Left colon (tissue), 2 donors: ENCODE measurements at regions of chrX and their contacts with region 1.

Region 1: DNA sequence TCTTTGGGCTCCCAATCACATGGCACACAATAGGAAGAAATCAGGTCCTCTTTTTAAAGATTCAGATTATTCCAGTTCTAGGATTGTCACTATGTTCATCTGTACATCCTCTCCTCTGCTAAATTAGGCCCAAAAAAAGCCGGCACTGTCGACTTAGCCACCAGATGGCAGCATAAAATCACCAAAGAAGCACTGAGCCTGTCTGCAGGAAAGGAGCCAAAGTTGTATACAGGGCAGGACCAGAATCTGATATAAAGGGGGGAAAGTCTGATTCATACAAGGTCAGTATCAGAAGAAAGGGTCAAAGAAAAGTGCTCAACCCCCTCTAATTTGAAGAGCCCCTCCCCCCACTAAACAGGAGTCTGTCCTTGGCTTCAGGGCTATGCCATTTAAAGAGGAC is 292.5 kb downstream of the CHIC1 start:
- DNase-seq: peak; percentile 49 to 70
- ATAC-seq: peak; percentile 19

Region 2: GRCh38 chrX:73943693-73944562 is 88.4 kb after region 1 on chrX:
- intact Hi-C with region 1: loop called in 1 of 2 experiments (anchors 10 kb)
- DNase-seq: peak; percentile 88 to 94
- ATAC-seq: peak; percentile 100

Region 3: DNA sequence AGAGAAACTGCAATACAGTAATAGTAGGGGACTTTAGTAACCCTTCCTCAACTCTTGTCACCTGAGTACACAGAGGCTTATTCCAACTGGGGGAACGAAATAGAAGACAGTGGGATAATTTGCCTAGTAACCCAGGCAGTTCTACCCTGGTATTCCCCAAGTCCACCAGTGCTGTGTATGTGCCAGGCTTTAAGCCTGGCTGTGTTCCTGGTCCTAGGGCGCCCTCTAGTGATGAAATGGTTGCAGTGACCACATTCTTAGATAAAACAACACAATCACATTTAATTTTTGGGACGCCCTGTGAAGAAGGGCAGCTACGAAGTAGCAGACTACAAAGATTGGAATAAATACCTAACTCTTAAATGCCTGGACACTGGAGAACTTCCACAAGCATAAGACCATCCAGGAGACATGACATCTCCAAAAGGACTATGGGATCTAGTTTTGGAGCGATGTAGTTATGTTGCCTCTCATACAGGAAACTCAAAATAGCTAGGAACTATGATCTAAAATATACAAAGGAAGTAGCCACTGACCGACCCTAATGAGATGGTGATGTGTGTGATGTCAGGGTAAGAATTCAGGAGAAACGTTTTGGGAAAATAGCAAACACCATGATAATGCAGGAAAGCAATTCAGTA is 160.0 kb after region 1 on chrX:
- intact Hi-C with region 1: loop called in 1 of 2 experiments (anchors 5 kb)
- DNase-seq: peak; percentile 33 to 72
- ATAC-seq: peak; percentile 91

Region 4: GRCh38 chrX:74133156-74133796 is 277.7 kb after region 1 on chrX:
- intact Hi-C with region 1: loop called in 1 of 2 experiments (anchors 5 kb)
- DNase-seq: no peak
- ATAC-seq: peak; percentile 82

Region 5: GRCh38 chrX:74343343-74344279 is 488.1 kb after region 1 on chrX:
- intact Hi-C with region 1: loop called in 1 of 2 experiments (anchors 10 kb)
- DNase-seq: peak; percentile 55 to 56
- ATAC-seq: peak; percentile 98

Region 6: GRCh38 chrX:74536152-74536831 is 680.7 kb after region 1 on chrX:
- intact Hi-C with region 1: loop called in 1 of 2 experiments (anchors 10 kb)
- DNase-seq: peak; percentile 70 to 84
- ATAC-seq: peak; percentile 80